CD4-positive, alpha-beta T cell (primary cell): ENCODE measurements at regions of chr18 and their contacts with region 1.

Region 1: GRCh38 chr18:74896390-74896991 is 298.8 kb downstream of the ZNF407 start:
- DNase-seq: peak; percentile 14 to 68 (median 42)
- ATAC-seq: peak; percentile 77
- H3K4me3 ChIP-seq: no peak overlapping the region
- H3K4me3 Mint-ChIP-seq: no peak overlapping the region
- H3K27ac ChIP-seq: no peak overlapping the region
- H3K27ac Mint-ChIP-seq: no peak overlapping the region
- H3K4me1 ChIP-seq: no peaks in the 10 kb centered on the region
- H3K4me1 Mint-ChIP-seq: peaks cover 6% of the 10 kb centered on the region
- H3K27me3 ChIP-seq: no peaks in the 10 kb centered on the region
- H3K27me3 Mint-ChIP-seq: no peaks in the 10 kb centered on the region
- CTCF ChIP-seq: peak; percentile 76

Region 2: GRCh38 chr18:75070625-75071483 is 174.4 kb after region 1 on chr18:
- CTCF ChIA-PET with region 1: no interaction called
- POLR2A ChIA-PET with region 1: interaction called, 3 read pairs
- intact Hi-C with region 1: loop called in 1 of 2 experiments (anchors 10 kb)
- DNase-seq: peak; percentile 47 to 88 (median 72)
- ATAC-seq: peak; percentile 87
- H3K4me3 ChIP-seq: peak overlapping the region; percentile 54
- H3K4me3 Mint-ChIP-seq: peak overlapping the region; percentile 88
- H3K27ac ChIP-seq: peak overlapping the region; percentile 71 to 91
- H3K27ac Mint-ChIP-seq: peak overlapping the region; percentile 95
- H3K4me1 ChIP-seq: peaks cover 53% of the 10 kb centered on the region
- H3K4me1 Mint-ChIP-seq: peaks cover 46% of the 10 kb centered on the region
- H3K27me3 ChIP-seq: no peaks in the 10 kb centered on the region
- H3K27me3 Mint-ChIP-seq: no peaks in the 10 kb centered on the region
- CTCF ChIP-seq: no peak

Region 3: GRCh38 chr18:75088622-75089211 is 192.2 kb after region 1 on chr18:
- CTCF ChIA-PET with region 1: no interaction called
- POLR2A ChIA-PET with region 1: no interaction called
- intact Hi-C with region 1: loop called in 1 of 2 experiments (anchors 5 kb)
- DNase-seq: no peak
- ATAC-seq: no peak
- H3K4me3 ChIP-seq: no peak overlapping the region
- H3K4me3 Mint-ChIP-seq: no peak overlapping the region
- H3K27ac ChIP-seq: no peak overlapping the region
- H3K27ac Mint-ChIP-seq: no peak overlapping the region
- H3K4me1 ChIP-seq: no peaks in the 10 kb centered on the region
- H3K4me1 Mint-ChIP-seq: no peaks in the 10 kb centered on the region
- H3K27me3 ChIP-seq: no peaks in the 10 kb centered on the region
- H3K27me3 Mint-ChIP-seq: no peaks in the 10 kb centered on the region
- CTCF ChIP-seq: no peak

Region 4: GRCh38 chr18:75247611-75248421 is 351.3 kb after region 1 on chr18:
- CTCF ChIA-PET with region 1: no interaction called
- POLR2A ChIA-PET with region 1: no interaction called
- intact Hi-C with region 1: loop called (anchors 1 to 2 kb)
- DNase-seq: peak in 3 of 14 experiments; percentile 63 to 82 (median 64)
- ATAC-seq: peak; percentile 61
- H3K4me3 ChIP-seq: peak overlapping the region; percentile 51
- H3K4me3 Mint-ChIP-seq: peak overlapping the region; percentile 85
- H3K27ac ChIP-seq: peak overlapping the region; percentile 66 to 83
- H3K27ac Mint-ChIP-seq: peak overlapping the region; percentile 88
- H3K4me1 ChIP-seq: peaks cover 63% of the 10 kb centered on the region
- H3K4me1 Mint-ChIP-seq: peaks cover 73% of the 10 kb centered on the region
- H3K27me3 ChIP-seq: no peaks in the 10 kb centered on the region
- H3K27me3 Mint-ChIP-seq: no peaks in the 10 kb centered on the region
- CTCF ChIP-seq: no peak

Region 5: DNA sequence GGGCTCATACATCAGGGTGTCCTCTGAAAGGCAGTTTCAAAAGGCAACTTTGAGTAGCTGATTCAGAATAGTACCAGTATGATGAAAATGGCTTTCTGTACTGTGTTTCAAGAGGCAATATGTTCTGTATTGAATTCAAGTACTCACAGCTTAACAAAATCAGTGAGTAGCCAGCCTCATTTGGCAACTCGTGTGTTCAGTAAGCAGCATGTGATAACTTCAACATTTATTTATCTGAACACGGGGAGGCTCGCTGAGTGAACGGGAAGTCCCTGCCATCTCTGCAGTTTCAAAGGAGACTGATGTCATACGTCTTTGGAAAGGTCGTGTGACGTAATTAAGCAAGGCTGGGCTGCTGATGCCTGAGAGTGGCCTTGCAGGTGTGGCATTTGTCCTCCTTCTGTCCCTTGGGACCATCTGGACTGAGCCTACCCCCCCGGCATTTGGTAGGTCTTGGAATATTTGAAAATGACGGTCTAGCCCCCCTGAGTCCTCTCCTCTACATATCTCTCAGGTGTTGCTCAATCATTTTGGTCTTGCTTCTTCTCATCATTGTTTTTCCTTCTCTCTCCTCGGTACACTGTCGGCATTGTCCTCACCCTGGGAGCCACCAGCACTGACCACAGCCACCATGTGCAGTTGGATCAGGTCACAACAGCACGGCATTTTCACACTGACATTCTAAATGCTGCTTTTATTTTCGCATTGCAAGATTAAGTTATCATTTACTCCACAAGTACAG is 468.2 kb after region 1 on chr18:
- CTCF ChIA-PET with region 1: no interaction called
- POLR2A ChIA-PET with region 1: no interaction called
- intact Hi-C with region 1: loop called (anchors 10 kb)
- DNase-seq: peak in 2 of 14 experiments; percentile 6 to 17
- ATAC-seq: no peak
- H3K4me3 ChIP-seq: no peak overlapping the region
- H3K4me3 Mint-ChIP-seq: no peak overlapping the region
- H3K27ac ChIP-seq: no peak overlapping the region
- H3K27ac Mint-ChIP-seq: no peak overlapping the region
- H3K4me1 ChIP-seq: no peaks in the 10 kb centered on the region
- H3K4me1 Mint-ChIP-seq: no peaks in the 10 kb centered on the region
- H3K27me3 ChIP-seq: peaks cover 0 to 2% of the 10 kb centered on the region in 2 experiments
- H3K27me3 Mint-ChIP-seq: peaks cover 2% of the 10 kb centered on the region
- CTCF ChIP-seq: no peak

Region 6: GRCh38 chr18:75478996-75479880 is 582.7 kb after region 1 on chr18:
- CTCF ChIA-PET with region 1: no interaction called
- POLR2A ChIA-PET with region 1: no interaction called
- intact Hi-C with region 1: loop called in 1 of 2 experiments (anchors 1 kb)
- DNase-seq: peak in 3 of 14 experiments; percentile 53 to 70 (median 68)
- ATAC-seq: peak; percentile 39
- H3K4me3 ChIP-seq: no peak overlapping the region
- H3K4me3 Mint-ChIP-seq: no peak overlapping the region
- H3K27ac ChIP-seq: no peak overlapping the region
- H3K27ac Mint-ChIP-seq: no peak overlapping the region
- H3K4me1 ChIP-seq: no peaks in the 10 kb centered on the region
- H3K4me1 Mint-ChIP-seq: no peaks in the 10 kb centered on the region
- H3K27me3 ChIP-seq: peaks cover 5 to 8% of the 10 kb centered on the region in 2 experiments
- H3K27me3 Mint-ChIP-seq: peaks cover 20% of the 10 kb centered on the region
- CTCF ChIP-seq: peak; percentile 67

Region 7: DNA sequence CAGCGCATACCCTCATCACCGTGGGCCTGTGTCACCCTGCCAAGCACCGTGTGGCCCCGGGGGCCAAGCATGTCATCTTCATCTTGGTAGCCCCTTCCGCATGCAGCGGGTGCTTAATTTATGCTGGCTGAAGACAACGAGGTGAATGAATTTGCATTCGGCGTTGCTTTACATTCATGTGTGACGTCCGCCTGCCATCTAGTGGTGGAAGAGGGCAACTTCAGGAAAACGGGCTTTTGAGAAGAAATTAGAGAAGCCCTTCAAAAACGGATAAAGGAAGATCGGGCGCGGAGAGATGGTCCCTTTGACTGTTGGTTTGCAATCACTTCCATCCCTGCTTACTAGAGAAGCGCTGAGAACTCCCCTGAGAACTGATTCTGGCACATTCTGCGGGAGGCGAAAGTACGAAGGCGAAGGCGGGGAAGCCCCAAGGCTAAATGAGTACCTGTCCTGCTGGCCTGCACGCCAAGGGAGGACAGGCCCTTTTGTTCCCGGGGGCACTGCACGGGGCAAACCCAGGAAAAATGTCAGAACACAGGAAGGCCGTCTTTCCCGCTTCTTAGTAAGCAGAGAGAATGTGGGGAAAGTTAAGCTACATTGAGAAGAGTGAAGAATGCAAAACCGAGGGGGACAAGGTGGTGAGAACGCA is 1452.7 kb after region 1 on chr18:
- CTCF ChIA-PET with region 1: no interaction called
- POLR2A ChIA-PET with region 1: no interaction called
- intact Hi-C with region 1: loop called in 1 of 2 experiments (anchors 10 kb)
- DNase-seq: peak; percentile 42 to 76 (median 46)
- ATAC-seq: peak; percentile 52
- H3K4me3 ChIP-seq: no peak overlapping the region
- H3K4me3 Mint-ChIP-seq: no peak overlapping the region
- H3K27ac ChIP-seq: no peak overlapping the region
- H3K27ac Mint-ChIP-seq: no peak overlapping the region
- H3K4me1 ChIP-seq: peaks cover 3% of the 10 kb centered on the region
- H3K4me1 Mint-ChIP-seq: peaks cover 7% of the 10 kb centered on the region
- H3K27me3 ChIP-seq: no peaks in the 10 kb centered on the region
- H3K27me3 Mint-ChIP-seq: no peaks in the 10 kb centered on the region
- CTCF ChIP-seq: peak; percentile 92